Right ventricle myocardium superior (tissue), 1 donor: ENCODE measurements at regions of chr2 and their contacts with region 1.

Region 1: GRCh38 chr2:106104332-106105062 is 89.6 kb downstream of the UXS1 start:
- DNase-seq: no peak
- ATAC-seq: peak; percentile 76

Region 2: DNA sequence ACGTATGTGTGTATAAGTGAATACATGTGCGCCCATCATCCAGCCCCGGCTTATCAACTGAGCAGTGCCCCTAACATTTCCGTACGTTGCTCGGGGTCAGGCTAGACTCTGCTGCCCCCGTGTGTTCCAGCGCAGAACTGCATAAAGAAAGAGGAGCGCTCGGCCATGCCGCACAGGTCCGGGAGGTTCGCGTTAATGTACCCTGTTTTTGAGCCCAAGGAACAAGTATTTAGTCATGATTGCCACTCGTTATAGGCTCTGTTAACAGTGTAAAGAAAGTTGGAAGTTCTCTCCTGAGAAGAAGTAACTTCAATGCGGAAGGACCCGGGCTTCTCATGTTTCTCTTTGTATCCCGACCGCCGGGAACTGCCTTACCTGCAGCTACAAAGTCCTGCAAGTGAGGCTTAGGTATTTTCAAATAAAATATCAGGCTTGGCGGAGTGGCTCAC is 438.3 kb after region 1 on chr2:
- intact Hi-C with region 1: loop called (anchors 5 kb)
- DNase-seq: peak; percentile 80
- ATAC-seq: peak; percentile 90

Region 3: DNA sequence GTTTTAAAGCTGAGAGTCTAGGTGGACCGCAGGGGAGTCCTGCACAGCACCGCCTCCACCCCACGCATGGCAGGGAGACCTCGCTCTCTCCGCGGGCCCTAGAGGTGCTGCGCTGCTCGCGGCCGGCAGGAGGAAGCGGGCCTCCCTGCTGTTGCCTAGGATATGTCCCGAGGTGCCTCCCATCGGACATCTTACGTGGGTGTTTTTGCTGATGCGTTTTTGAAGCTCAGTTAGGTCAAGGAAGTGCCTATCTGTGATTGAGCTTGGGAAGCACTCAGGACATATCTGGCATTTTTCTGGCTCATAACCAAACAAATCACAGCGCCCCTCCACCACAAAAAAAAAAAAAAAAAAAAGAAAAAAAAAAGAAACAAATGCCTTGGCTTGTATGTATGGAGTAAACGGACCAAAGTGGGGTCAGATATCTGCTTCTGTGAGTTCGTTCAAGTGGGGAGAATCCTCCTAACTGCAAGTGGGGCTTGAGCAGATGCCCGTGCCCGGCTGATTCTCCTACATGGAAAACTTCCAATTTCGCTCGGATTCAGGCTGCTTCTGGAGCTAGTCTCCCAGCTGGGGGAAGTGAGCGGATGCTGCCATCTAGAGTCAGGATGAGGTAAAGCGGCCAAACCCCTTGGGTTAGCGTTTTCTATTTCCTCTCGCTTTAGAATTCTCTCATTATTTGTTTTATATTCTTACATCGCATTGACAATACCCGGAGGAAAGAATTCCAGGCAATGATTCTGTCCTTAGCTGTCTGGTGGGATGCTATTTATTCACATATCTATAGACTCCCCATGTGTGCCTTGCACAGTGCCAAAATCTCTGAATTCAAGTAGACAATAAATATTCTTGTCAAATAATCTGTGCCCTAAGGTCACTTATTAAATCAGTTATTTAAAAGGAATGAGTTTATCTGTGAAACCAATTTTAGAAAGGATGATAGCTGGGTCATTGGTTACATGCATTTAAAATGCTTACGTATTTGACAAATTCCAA is 477.9 kb after region 1 on chr2:
- intact Hi-C with region 1: loop called (anchors 5 kb)
- DNase-seq: peak; percentile 72
- ATAC-seq: peak; percentile 90